Mammary epithelial cell (primary cell): ENCODE measurements at regions of chr7 and their contacts with region 1.

Region 1: GRCh38 chr7:101542527-101543241 is 86.4 kb downstream of the MYL10 start:
- DNase-seq: peak; percentile 34
- H3K4me3 ChIP-seq: no peak overlapping the region
- H3K27ac ChIP-seq: no peak overlapping the region
- H3K4me1 ChIP-seq: no peaks in the 10 kb centered on the region
- H3K27me3 ChIP-seq: no peaks in the 10 kb centered on the region
- CTCF ChIP-seq: peak; percentile 76 to 89

Region 2: GRCh38 chr7:101363734-101364374 is 178.8 kb before region 1 on chr7:
- CTCF ChIA-PET with region 1: no interaction called
- dilution Hi-C with region 1: no loop called
- in situ Hi-C with region 1: no loop called
- intact Hi-C with region 1: loop called (anchors 5 kb)
- DNase-seq: peak; percentile 42
- H3K4me3 ChIP-seq: peak overlapping the region; percentile 36 to 47 (median 45)
- H3K27ac ChIP-seq: no peak overlapping the region
- H3K4me1 ChIP-seq: peaks cover 6% of the 10 kb centered on the region
- H3K27me3 ChIP-seq: peaks cover 9% of the 10 kb centered on the region
- CTCF ChIP-seq: peak; percentile 46 to 92

Region 3: DNA sequence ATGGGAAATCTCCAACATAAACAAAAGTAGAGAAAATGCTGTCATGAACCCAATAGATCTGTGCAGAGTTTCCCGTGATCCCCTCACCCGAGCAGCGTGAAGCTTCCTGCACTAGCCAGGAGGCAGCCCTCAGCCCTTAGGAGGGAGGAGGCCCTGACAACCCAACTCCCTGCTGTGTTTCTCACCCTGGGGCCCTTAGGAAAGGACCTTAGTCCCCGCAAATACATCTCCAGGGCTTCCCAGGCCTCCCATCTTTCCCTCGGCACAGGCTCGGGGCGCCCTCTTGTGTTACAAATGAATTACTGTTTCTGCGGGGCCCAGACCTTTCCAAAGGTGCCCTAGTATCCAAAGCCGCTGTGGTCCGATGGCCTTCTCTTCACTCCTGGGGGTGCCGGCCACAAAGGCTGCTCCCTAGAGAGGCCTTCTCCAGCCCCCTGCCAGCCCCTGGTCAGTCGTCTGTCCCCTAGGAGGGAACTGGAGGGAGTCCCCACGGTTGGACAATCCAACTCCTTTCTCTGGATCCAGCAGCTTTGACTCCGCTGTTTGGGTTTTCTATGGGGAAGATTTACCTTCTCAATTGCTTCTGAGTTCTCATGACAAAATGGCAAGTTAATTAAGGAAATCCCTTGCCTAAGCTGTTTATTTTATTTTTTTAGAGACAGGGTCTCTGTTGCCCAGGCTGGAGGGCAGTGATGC is 694.1 kb after region 1 on chr7:
- CTCF ChIA-PET with region 1: interaction called, 4 read pairs
- dilution Hi-C with region 1: loop called (anchors 5 kb)
- in situ Hi-C with region 1: no loop called
- intact Hi-C with region 1: loop called (anchors 1 kb)
- DNase-seq: peak; percentile 44
- H3K4me3 ChIP-seq: no peak overlapping the region
- H3K27ac ChIP-seq: no peak overlapping the region
- H3K4me1 ChIP-seq: no peaks in the 10 kb centered on the region
- H3K27me3 ChIP-seq: no peaks in the 10 kb centered on the region
- CTCF ChIP-seq: peak; percentile 78 to 87

Region 4: DNA sequence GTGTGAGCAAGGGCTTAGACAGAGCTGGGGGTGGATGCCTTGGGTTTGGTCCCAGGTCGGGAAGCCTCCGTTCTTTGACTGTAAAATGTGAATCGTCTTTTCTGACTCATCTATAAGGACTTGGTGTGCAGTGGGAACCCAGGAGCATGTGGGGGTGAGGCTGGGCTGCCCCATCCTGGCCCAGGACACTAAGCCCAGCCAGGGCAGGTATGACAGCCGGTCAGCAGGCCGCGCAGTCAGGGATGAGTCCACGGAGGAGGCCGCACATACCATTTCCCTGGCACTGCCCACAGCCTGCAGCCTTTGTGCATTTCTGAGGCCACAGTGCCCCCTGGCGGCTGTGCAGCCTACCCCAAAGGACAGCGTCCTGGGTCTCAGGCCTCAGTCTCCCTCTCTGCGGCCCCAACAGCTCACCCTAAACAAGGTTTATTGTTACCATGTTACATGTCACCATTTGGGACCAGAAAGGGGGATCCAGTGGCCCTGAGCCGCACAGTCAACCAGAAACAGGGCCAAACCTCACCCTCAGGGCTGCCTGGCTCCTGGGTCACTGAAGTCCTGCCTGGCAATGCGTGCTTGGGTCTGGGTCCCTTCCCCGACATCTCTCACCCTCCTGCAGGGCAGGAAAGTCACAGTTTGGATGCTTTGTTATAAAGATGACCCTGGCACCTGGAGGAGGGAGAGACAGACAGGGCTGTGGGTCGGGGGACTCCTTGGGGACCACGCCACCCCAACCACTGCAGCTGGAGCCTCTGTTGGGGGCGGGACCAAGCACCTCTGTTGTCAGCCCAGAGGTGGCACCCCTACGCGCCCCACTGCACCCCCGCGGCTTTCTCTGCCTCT is 729.6 kb after region 1 on chr7:
- CTCF ChIA-PET with region 1: no interaction called
- dilution Hi-C with region 1: no loop called
- in situ Hi-C with region 1: loop called (anchors 5 to 10 kb)
- intact Hi-C with region 1: loop called (anchors 1 kb)
- DNase-seq: peak; percentile 66
- H3K4me3 ChIP-seq: no peak overlapping the region
- H3K27ac ChIP-seq: no peak overlapping the region
- H3K4me1 ChIP-seq: peaks cover 5% of the 10 kb centered on the region
- H3K27me3 ChIP-seq: no peaks in the 10 kb centered on the region
- CTCF ChIP-seq: peak; percentile 91 to 95

Region 5: DNA sequence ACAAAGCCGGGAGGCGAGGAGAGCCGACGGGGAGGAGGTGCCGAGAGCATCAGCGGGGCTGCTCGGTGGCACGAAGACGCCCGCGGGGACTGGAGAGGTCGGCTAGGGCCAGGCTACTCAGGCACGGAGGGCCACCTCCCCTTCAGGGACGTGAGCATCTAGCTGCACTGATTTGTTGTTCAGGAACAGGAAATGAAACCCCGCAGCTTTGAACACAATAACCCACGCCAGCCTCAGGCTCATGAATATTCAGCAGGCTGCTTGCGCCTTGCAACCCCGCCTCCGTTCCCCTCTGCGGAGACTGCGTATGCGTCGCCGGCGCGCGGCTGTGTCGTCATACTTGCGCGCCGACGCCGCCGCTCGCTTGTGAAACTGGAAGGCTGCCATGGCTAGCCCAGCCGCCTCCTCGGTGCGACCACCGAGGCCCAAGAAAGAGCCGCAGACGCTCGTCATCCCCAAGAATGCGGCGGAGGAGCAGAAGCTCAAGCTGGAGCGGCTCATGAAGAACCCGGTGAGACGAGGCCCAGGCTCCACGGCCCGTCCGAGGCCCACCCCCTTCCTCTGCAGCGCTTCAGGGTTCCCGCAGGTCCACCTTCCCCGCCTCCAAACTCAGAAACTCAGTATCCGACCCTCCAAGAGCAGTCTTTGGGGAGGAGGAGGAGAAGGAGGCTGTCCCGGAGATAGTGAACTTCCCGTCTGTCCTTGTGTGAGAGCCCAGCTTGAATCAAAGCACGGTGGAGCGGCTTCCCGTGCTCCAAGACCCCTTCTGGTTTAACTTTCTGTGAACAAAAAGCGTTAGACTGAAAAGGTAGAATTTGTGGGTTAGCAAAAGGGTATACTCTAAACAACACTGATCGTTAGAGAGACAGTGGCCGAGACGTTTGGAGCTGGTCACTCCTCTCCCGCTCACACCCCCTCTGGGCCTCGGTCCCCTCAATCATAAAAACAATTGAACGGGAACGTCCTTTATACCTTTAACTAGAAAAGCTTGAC is 853.6 kb after region 1 on chr7 and contains the start of gene PRKRIP1:
- CTCF ChIA-PET with region 1: no interaction called
- dilution Hi-C with region 1: no loop called
- in situ Hi-C with region 1: loop called in 1 of 2 experiments (anchors 25 kb)
- intact Hi-C with region 1: no loop called
- DNase-seq: peak; percentile 89
- H3K4me3 ChIP-seq: peak within 1 kb of the TSS; percentile 76 to 97 (median 94)
- H3K27ac ChIP-seq: peak within 1 kb of the TSS; percentile 88
- H3K4me1 ChIP-seq: peaks cover 6% of the 10 kb centered on the region
- H3K27me3 ChIP-seq: no peaks in the 10 kb centered on the region
- CTCF ChIP-seq: no peak
- total RNA-seq, gene PRKRIP1: 13.3 to 27.1 TPM